A549 (cell line): ENCODE measurements at regions of chr17 and their contacts with region 1.

Region 1: GRCh38 chr17:41548844-41549595 is 20.9 kb upstream of the KRT19 start:
- DNase-seq: peak; percentile 94 to 96
- ATAC-seq: peak; percentile 79 to 91
- H3K4me3 ChIP-seq: peak overlapping the region; percentile 33
- H3K27ac ChIP-seq: peak overlapping the region; percentile 89 to 96
- H3K4me1 ChIP-seq: peaks cover 40% of the 10 kb centered on the region
- CTCF ChIP-seq: peak; percentile 99
- EP300 ChIP-seq: no peak
- POLR2A ChIP-seq: peak; percentile 16; the same call in 1 of the 2 replicates
- RAD21 ChIP-seq: peak; percentile 93 to 97

Region 2: DNA sequence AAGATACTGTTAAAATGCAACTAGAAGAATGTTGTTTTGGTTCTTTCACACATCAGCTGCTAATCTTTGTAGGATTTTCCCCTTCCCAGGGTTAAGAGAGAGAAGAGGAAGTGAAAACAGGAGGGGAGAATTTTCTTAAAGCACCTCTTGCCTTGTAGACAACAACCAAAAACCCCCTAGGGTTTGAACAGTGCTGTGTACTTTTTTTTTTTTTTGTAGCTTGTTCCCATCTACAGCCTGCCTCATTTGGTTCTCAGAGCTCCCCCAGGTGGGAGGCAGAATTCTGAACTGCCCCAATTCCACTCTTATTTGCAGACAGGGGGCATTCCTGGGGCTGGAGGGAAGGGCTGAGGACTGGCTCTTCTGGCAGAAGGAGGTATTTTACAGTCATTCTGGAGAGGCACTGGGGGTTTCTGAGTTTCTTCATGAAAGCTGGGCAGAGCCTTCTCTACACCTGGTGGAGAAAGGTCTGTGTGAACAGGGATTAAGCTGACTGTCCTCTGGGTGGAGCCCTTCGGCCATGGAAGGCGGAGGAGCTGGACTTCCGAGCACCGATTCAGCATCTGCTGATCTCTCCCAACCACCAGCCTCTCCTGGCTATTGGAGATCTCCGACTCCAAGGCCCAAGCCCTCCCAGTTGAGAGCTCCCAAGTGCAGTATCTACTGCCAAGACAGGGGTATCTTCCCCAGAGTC is 933.6 kb before region 1 on chr17:
- CTCF ChIA-PET with region 1: interaction called, 16 read pairs
- POLR2A ChIA-PET with region 1: interaction called, 3 read pairs
- DNase-seq: peak; percentile 84 to 91
- ATAC-seq: peak; percentile 84 to 93
- H3K4me3 ChIP-seq: no peak overlapping the region
- H3K27ac ChIP-seq: peak overlapping the region in 1 of 2 experiments; percentile 45; a peak in 2 of 6 replicates
- H3K4me1 ChIP-seq: peaks cover 12% of the 10 kb centered on the region
- CTCF ChIP-seq: peak; percentile 93
- EP300 ChIP-seq: no peak
- POLR2A ChIP-seq: no peak
- RAD21 ChIP-seq: peak; percentile 94 to 96

Region 3: DNA sequence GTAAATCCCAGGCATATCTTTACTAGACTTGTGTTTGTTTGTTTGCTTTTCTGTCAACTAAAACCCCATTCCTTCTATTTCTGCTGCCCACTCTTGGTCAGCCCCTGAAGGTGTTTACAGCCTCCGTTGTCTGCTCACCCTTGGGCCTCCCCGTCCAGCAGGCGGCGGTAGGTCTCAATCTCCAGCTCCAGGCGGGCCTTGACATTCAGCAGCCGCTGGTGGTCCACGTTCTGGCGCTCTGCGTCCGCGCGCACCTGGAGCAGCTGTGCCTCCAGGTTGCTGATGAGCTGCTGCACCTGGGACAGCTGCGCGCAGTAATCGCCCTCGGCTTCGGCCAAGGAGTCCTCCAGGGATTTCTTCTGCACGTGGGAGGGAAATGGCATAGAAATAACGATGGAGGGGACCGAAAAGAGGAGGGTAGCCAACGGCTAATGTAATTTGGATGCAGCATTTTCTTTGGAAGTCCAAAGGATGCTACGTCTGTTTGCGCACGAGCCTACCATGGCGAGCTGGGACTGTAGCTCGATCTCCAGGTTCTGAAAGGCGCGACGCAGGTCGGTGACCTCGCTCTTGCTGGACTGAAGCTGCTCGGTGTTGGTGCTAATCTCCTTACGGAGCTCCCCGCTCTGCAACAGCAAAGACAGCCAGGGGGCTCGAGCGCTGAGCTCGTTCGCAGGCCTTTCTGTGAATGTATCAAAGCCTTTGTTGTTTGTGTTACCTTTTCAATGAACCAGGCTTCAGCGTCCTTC is 685.9 kb before region 1 on chr17:
- CTCF ChIA-PET with region 1: interaction called, 183 read pairs
- POLR2A ChIA-PET with region 1: interaction called, 9 read pairs
- DNase-seq: no peak
- ATAC-seq: peak in 1 of 2 experiments; percentile 47; a peak in 3 of 6 replicates
- H3K4me3 ChIP-seq: no peak overlapping the region
- H3K27ac ChIP-seq: peak overlapping the region in 1 of 2 experiments; percentile 6; a peak in 1 of 6 replicates
- H3K4me1 ChIP-seq: peaks cover 15% of the 10 kb centered on the region; the same call in 2 of the 3 replicates
- CTCF ChIP-seq: no peak
- EP300 ChIP-seq: no peak
- POLR2A ChIP-seq: no peak
- RAD21 ChIP-seq: peak in 1 of 2 experiments; percentile 33; a peak in 1 of 5 replicates

Region 4: DNA sequence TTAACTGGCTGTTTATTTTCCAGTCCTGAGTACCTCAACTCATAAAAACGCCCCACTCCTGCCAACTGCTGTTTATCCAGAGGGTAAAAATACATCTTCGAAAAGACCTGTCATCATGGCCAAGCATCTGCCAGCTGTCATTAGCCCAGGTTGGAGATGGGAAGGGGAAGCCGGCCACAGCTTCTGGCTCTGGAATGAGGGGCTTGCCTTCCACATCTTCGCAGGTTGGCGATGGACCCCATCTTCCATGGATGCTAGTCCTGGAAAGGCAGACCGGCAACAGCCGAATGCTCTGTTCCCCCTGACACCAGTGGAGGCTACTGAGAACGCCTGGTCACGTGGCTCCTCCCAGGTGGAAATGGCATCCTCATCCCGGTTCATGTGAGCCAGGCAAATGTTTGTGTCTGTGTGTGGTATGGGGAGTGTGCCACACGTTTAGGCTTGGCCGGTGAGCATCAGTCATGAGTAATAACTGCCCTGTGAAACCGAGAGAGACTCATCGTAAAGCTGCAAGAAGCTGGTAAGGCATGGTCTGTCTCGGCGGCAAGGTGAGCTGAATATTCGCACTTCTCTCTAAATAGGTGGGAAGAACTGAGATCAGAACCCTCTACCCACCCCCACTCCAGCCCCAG is 233.1 kb before region 1 on chr17:
- CTCF ChIA-PET with region 1: interaction called, 11 read pairs
- POLR2A ChIA-PET with region 1: no interaction called
- DNase-seq: no peak
- ATAC-seq: no peak
- H3K4me3 ChIP-seq: no peak overlapping the region
- H3K27ac ChIP-seq: no peak overlapping the region
- H3K4me1 ChIP-seq: no peaks in the 10 kb centered on the region
- CTCF ChIP-seq: no peak
- EP300 ChIP-seq: no peak
- POLR2A ChIP-seq: no peak
- RAD21 ChIP-seq: no peak

Region 5: GRCh38 chr17:41417576-41418015 is 131.4 kb before region 1 on chr17:
- CTCF ChIA-PET with region 1: interaction called, 12 read pairs
- POLR2A ChIA-PET with region 1: no interaction called
- DNase-seq: peak in 1 of 2 experiments; percentile 67
- ATAC-seq: peak; percentile 62 to 91; a peak in 4 of 6 replicates
- H3K4me3 ChIP-seq: no peak overlapping the region
- H3K27ac ChIP-seq: no peak overlapping the region
- H3K4me1 ChIP-seq: 0 out of 3 replicates have a peak, but pooled peaks cover 4% of the 10 kb centered on the region
- CTCF ChIP-seq: peak; percentile 36; the same call in 2 of the 3 replicates
- EP300 ChIP-seq: no peak
- POLR2A ChIP-seq: no peak
- RAD21 ChIP-seq: peak in 1 of 2 experiments; percentile 50; a peak in 2 of 5 replicates

Region 6: GRCh38 chr17:41538565-41538991 is 10.4 kb before region 1 on chr17:
- CTCF ChIA-PET with region 1: interaction called, 141 read pairs
- POLR2A ChIA-PET with region 1: no interaction called
- DNase-seq: no peak
- ATAC-seq: no peak
- H3K4me3 ChIP-seq: no peak overlapping the region
- H3K27ac ChIP-seq: peak overlapping the region in 1 of 2 experiments; percentile 40; a peak in 3 of 6 replicates
- H3K4me1 ChIP-seq: peaks cover 16% of the 10 kb centered on the region; the same call in 2 of the 3 replicates
- CTCF ChIP-seq: no peak
- EP300 ChIP-seq: no peak
- POLR2A ChIP-seq: no peak
- RAD21 ChIP-seq: no peak

Region 7: DNA sequence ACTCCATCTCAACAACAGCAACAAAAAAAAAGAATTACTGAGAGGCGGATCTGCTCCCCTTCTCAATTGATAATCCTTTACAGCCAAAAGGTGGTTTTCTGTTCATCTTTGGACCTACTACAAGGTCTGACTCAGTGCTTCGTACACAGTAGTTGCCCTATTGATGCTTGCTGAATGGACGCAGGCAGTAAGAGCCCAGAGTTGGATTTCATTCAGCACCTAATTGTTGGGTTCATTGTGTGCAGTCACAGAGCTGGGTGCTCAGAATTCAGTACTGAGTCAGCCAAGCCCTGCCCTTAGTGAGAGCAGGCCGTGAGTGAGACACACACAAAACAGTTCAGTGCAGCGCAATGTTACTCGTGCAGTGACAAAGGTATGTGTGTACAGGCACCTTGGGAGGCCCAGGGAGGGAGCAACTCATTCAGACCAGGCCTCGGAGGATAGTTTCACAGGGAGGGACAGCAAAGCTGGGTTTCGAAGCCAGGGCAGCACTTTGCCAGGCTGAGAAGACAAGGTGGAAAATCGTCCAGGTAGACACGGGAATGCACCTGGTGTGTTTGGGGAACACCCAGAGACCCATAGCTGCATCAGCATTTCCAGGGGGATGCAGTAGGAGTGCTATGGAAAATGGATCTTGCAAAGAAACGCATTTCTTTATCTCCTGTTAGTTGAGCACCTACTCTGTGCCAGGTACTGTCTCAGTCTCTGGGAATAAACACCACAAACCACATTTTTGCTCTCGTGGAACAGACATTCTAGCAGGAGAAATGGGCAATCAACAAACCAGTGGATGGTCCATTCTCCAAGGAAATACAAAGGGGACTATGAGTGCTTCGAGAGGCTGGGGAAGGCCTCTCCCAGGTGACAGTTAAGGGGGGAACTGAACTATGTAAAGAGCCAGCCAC is 93.5 kb after region 1 on chr17:
- CTCF ChIA-PET with region 1: interaction called, 533 read pairs
- POLR2A ChIA-PET with region 1: interaction called, 21 read pairs
- DNase-seq: no peak
- ATAC-seq: no peak
- H3K4me3 ChIP-seq: no peak overlapping the region
- H3K27ac ChIP-seq: no peak overlapping the region
- H3K4me1 ChIP-seq: peaks cover 13% of the 10 kb centered on the region
- CTCF ChIP-seq: no peak
- EP300 ChIP-seq: no peak
- POLR2A ChIP-seq: no peak
- RAD21 ChIP-seq: no peak

Region 8: GRCh38 chr17:41864836-41865595 is 316.0 kb after region 1 on chr17 and contains the start of gene KLHL11:
- CTCF ChIA-PET with region 1: no interaction called
- POLR2A ChIA-PET with region 1: no interaction called
- DNase-seq: peak; percentile 93 to 96
- ATAC-seq: peak; percentile 89 to 96
- H3K4me3 ChIP-seq: peak within 1 kb of the TSS; percentile 89
- H3K27ac ChIP-seq: peak within 1 kb of the TSS; percentile 92 to 94
- H3K4me1 ChIP-seq: peaks cover 34% of the 10 kb centered on the region
- CTCF ChIP-seq: no peak
- EP300 ChIP-seq: no peak
- POLR2A ChIP-seq: peak; percentile 96
- RAD21 ChIP-seq: peak in 1 of 2 experiments; percentile 24; a peak in 2 of 5 replicates
- polyA plus RNA-seq, gene KLHL11: 12.7 and 13.7 TPM in 2 replicates